Heart left ventricle (tissue), 16 donors: ENCODE measurements at regions of chr3 and their contacts with region 1.

Region 1: GRCh38 chr3:181210275-181210674 is 220.7 kb upstream of the DNAJC19 start:
- DNase-seq: no peak
- ATAC-seq: no peak
- H3K4me3 ChIP-seq: no peak overlapping the region
- H3K27ac ChIP-seq: no peak overlapping the region
- H3K4me1 ChIP-seq: no peaks in the 10 kb centered on the region
- H3K27me3 ChIP-seq: peaks cover 0 to 28% (median 0%) of the 10 kb centered on the region in 9 donors
- CTCF ChIP-seq: peak in 10 of 12 donors; percentile 13 to 49 (median 38)
- POLR2A ChIP-seq: no peak

Region 2: GRCh38 chr3:181292984-181293383 is 82.7 kb after region 1 on chr3:
- intact Hi-C with region 1: no loop called
- DNase-seq: no peak
- ATAC-seq: no peak
- H3K4me3 ChIP-seq: no peak overlapping the region
- H3K27ac ChIP-seq: no peak overlapping the region
- H3K4me1 ChIP-seq: no peaks in the 10 kb centered on the region
- H3K27me3 ChIP-seq: peaks cover 0 to 3% (median 0%) of the 10 kb centered on the region in 9 donors
- CTCF ChIP-seq: no peak
- POLR2A ChIP-seq: no peak

Region 3: DNA sequence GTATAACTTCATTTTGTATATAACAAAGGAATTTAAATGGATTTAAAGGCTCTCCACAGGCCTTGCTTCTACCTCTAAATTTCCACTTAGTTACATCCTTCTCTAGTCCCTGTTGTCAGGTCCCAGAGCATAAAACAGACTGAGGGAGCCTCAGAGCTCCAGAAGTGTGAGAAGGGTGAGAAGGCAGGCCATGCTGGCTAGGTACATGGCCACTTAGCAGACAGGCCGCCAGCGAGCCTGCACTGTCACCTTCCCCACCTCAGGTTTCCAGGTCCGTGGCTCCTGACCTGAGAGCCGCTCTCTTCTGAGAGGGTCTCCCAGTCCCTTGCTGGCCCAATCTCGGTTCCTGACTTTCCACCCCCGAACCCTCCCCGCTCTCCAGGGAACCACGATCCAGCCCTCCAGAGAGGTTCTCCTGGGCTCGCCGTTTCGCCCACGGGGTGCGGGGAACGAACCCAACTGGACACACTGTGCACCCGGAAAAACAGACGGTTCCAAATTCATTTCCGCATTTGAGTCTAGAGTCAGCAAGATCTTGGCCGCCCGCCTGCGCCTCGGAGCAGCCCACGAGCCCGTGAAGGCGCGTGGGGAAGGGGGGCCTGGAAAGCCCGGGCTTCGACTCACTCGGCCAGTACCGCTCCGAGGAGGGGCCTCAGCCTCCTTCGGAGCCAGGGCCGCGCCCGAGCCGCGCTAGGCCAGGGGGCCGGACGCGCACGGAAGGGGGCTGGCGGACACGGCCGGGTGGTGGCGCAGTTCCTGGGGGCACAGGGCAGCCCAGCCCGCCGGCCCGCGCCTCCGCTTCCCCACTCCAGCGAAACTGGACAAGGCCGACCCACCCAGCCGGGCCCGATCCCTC is 484.8 kb after region 1 on chr3:
- intact Hi-C with region 1: loop called in 6 of 10 experiments (anchors 5 kb)
- DNase-seq: peak in 4 of 5 donors; percentile 35 to 68 (median 59)
- ATAC-seq: peak in 3 of 4 donors; percentile 79 to 93 (median 86)
- H3K4me3 ChIP-seq: peak overlapping the region; percentile 13 to 58 (median 44)
- H3K27ac ChIP-seq: peak overlapping the region in 3 of 12 donors; percentile 14 to 29 (median 29)
- H3K4me1 ChIP-seq: peaks cover 0 to 22% (median 13%) of the 10 kb centered on the region in 12 donors
- H3K27me3 ChIP-seq: peaks cover 24 to 60% (median 50%) of the 10 kb centered on the region in 9 donors
- CTCF ChIP-seq: peak in 6 of 12 donors; percentile 9 to 36 (median 22)
- POLR2A ChIP-seq: no peak

Region 4: DNA sequence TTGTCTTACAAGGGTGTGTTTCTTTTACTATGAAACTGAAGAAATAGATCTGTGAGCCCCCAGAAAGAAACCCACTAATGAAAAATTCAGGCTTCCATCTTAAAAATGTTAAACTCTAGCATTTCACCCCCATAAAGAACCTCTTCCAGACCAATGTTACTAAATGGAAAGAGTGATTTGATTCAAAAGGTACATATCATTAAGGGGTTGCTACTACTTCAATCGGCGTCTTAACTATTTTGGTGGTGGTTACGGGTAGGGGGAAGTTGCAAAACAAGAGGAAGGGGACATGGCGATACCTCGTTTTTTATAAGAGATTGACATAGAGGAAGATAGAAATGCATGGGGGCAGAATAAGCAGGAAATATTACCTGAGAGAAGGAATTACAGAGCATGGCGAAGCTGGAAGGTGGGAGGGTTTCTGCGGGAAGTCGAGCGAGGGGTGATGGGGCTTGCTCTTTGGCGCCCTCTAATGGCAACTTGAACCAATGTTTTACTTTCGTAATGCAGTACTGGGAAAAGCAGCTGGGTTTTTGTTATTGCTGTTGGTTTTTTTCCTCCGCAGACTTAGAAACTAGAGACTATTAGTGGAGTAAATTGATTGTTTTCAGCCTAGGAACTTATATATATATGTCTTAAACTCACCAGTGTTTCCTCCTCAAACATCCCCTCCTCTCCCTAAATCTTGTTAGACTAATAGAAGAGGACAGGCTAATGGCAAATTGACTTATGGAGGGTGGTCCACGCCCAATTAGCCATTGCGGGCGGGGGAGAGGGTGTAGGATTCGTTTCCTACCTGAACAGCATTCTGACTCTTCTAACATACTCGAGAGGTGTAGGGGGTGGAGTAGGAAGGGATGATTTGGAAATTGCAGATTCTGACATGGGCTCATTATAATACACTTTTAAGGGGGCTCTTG is 490.2 kb after region 1 on chr3:
- intact Hi-C with region 1: loop called in 6 of 10 experiments (anchors 5 kb)
- DNase-seq: peak in 4 of 5 donors; percentile 41 to 60 (median 50)
- ATAC-seq: peak in 3 of 4 donors; percentile 69 to 81 (median 77)
- H3K4me3 ChIP-seq: peak overlapping the region in 3 of 12 donors; percentile 8 to 25 (median 13)
- H3K27ac ChIP-seq: no peak overlapping the region
- H3K4me1 ChIP-seq: peaks cover 0 to 31% (median 15%) of the 10 kb centered on the region in 12 donors
- H3K27me3 ChIP-seq: peaks cover 57 to 99% (median 97%) of the 10 kb centered on the region in 9 donors
- CTCF ChIP-seq: peak; percentile 61 to 90 (median 83)
- POLR2A ChIP-seq: no peak

Region 5: DNA sequence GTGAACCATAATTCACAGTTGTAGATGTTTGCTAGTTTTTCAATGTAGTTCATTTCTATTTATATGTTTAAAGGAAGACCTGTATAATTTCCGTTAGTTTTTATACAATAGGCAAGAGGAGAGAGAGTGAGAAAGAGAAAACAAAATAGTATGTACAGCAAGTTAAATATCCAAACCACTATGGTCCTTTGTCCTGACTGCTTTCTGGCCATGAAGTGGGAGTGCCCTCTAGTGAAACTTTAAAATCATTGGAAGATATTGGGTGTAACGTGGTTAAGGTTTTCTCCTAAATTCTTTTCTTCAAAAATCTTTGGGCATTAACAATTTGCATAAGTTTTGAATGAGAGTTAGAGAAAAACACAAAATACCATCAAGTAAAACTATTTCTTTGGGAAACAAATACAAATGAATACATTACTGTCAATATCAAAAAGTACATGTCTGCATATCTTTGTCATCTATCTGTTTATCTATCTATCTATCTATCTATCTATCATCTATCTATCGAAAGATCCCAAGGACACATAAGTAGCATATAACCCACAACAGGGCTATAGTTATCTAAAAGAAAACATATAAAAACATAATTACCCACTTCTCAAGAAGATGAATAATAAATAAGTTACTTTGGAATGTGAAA is 1048.4 kb after region 1 on chr3:
- intact Hi-C with region 1: loop called in 5 of 10 experiments (anchors 5 to 10 kb)
- DNase-seq: no peak
- ATAC-seq: peak in 1 of 4 donors; percentile 81
- H3K4me3 ChIP-seq: no peak overlapping the region
- H3K27ac ChIP-seq: no peak overlapping the region
- H3K4me1 ChIP-seq: no peaks in the 10 kb centered on the region
- H3K27me3 ChIP-seq: peaks cover 0 to 32% (median 7%) of the 10 kb centered on the region in 9 donors
- CTCF ChIP-seq: peak in 11 of 12 donors; percentile 17 to 70 (median 54)
- POLR2A ChIP-seq: no peak